IMR-90 (cell line): ENCODE measurements at regions of chr14 and their contacts with region 1.

Region 1: DNA sequence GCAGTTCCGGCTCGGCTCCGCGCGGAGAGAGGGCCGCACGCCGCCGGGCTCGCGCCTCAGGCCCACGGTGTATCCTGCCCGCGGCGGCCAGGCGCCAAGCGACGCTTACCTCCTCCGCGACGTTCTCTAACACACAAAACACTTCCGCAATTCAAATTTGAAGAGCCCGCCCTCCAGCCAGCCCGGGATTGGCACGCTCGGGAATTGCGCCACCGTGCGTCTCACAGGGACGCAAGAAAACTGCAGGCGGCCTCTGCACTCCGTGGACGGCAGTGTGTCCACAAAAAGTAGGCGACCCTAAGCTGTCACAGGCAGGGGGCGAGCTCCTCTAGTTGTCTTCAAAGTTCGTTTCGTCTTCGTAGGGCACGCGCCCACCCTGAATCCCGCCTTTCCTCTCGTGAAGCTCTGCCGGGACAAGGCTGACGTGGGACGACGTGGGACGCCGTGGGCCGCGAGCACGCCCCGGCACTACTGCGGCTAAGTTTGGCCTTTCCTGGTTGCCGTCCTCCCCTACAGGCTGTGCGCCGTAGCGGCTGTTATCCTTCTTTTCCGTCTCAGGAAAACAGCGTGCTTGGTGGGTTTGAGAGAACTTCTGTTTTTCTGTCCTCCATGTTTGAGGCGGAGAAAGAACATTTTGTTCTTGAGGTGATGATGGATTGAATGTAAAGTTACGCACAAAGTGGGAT is at the start of gene MIS18BP1:
- DNase-seq: peak; percentile 95
- ATAC-seq: peak; percentile 89
- H3K4me3 ChIP-seq: peak within 1 kb of the TSS; percentile 82
- H3K27ac ChIP-seq: peak within 1 kb of the TSS; percentile 99
- H3K4me1 ChIP-seq: peaks cover 4% of the 10 kb centered on the region; the same call in 1 of the 2 replicates
- H3K27me3 ChIP-seq: no peaks in the 10 kb centered on the region
- CTCF ChIP-seq: peak; percentile 76
- POLR2A ChIP-seq: peak; percentile 36; the same call in 1 of the 2 replicates
- RAD21 ChIP-seq: 0 out of 2 replicates have a peak, but pooled peaks have one; percentile 27
- total RNA-seq, gene MIS18BP1: 18.6 and 29.7 TPM in 2 replicates

Region 2: GRCh38 chr14:44897045-44897844 is 356.0 kb before region 1 on chr14:
- CTCF ChIA-PET with region 1: no interaction called
- POLR2A ChIA-PET with region 1: no interaction called
- dilution Hi-C with region 1: no loop called
- in situ Hi-C with region 1: no loop called
- intact Hi-C with region 1: loop called (anchors 5 kb)
- DNase-seq: peak; percentile 97
- ATAC-seq: peak; percentile 92
- H3K4me3 ChIP-seq: peak overlapping the region; percentile 96
- H3K27ac ChIP-seq: peak overlapping the region; percentile 98
- H3K4me1 ChIP-seq: peaks cover 8% of the 10 kb centered on the region
- H3K27me3 ChIP-seq: no peaks in the 10 kb centered on the region
- CTCF ChIP-seq: no peak
- POLR2A ChIP-seq: peak; percentile 85
- RAD21 ChIP-seq: no peak

Region 3: DNA sequence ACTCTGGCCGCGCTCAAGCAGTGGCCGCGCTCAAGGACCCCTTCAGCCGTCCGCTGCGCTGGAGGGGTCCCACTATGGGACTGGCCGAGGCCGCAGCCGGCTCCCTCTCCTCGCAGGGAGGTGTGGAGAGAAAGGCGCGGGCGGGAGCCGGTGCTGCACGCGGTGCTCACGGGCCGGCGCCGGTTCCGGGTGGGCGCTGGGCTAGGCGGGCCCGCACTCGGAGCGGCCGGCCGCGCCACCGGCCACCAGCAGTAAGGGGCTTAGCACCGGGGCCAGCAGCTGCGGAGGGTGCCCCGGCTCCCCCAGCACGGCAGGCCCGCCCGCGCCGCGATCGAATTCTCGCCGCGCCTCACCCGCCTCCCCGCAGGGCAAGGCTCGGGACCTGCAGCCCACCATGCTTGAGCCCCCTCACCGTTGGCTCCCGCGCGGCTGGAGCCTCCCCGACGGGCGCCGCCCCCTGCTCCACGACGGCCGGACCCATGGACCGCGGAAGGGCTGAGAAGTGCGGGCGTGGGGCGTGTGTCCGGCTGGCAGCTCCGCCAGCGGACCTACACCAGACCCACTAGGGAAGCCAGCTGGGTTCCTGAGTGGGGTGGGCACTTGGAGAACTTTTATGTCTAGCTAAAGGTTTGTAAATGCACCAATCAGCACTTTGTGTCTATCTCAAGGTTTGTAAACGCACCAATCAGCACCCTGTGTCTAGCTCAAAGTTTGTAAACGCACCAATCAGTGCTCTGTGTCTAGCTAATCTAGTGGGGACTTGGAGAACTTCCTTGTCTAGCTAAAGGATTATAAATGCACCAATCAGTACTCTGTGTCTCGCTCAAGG is 341.0 kb before region 1 on chr14:
- CTCF ChIA-PET with region 1: no interaction called
- POLR2A ChIA-PET with region 1: no interaction called
- dilution Hi-C with region 1: no loop called
- in situ Hi-C with region 1: no loop called
- intact Hi-C with region 1: loop called (anchors 5 kb)
- DNase-seq: no peak
- ATAC-seq: peak; percentile 30; the same call in 1 of the 2 replicates
- H3K4me3 ChIP-seq: peak overlapping the region; percentile 29; the same call in 1 of the 2 replicates
- H3K27ac ChIP-seq: no peak overlapping the region
- H3K4me1 ChIP-seq: 0 out of 2 replicates have a peak, but pooled peaks cover 1% of the 10 kb centered on the region
- H3K27me3 ChIP-seq: peaks cover 5% of the 10 kb centered on the region; the same call in 1 of the 2 replicates
- CTCF ChIP-seq: no peak
- POLR2A ChIP-seq: no peak
- RAD21 ChIP-seq: no peak

Region 4: GRCh38 chr14:44961604-44962333 is 291.4 kb before region 1 on chr14 and contains the starts of genes KLHL28 and TOGARAM1:
- CTCF ChIA-PET with region 1: no interaction called
- POLR2A ChIA-PET with region 1: no interaction called
- dilution Hi-C with region 1: no loop called
- in situ Hi-C with region 1: no loop called
- intact Hi-C with region 1: loop called (anchors 2 kb)
- DNase-seq: peak; percentile 100
- ATAC-seq: peak; percentile 88
- H3K4me3 ChIP-seq: peak within 1 kb of the TSS; percentile 68
- H3K27ac ChIP-seq: peak within 1 kb of the TSS; percentile 65
- H3K4me1 ChIP-seq: peaks cover 3% of the 10 kb centered on the region; the same call in 1 of the 2 replicates
- H3K27me3 ChIP-seq: no peaks in the 10 kb centered on the region
- CTCF ChIP-seq: no peak
- POLR2A ChIP-seq: peak; percentile 93
- RAD21 ChIP-seq: no peak
- total RNA-seq, gene KLHL28: 7.7 and 11.4 TPM in 2 replicates
- total RNA-seq, gene TOGARAM1: 11.1 and 13.4 TPM in 2 replicates

Region 5: DNA sequence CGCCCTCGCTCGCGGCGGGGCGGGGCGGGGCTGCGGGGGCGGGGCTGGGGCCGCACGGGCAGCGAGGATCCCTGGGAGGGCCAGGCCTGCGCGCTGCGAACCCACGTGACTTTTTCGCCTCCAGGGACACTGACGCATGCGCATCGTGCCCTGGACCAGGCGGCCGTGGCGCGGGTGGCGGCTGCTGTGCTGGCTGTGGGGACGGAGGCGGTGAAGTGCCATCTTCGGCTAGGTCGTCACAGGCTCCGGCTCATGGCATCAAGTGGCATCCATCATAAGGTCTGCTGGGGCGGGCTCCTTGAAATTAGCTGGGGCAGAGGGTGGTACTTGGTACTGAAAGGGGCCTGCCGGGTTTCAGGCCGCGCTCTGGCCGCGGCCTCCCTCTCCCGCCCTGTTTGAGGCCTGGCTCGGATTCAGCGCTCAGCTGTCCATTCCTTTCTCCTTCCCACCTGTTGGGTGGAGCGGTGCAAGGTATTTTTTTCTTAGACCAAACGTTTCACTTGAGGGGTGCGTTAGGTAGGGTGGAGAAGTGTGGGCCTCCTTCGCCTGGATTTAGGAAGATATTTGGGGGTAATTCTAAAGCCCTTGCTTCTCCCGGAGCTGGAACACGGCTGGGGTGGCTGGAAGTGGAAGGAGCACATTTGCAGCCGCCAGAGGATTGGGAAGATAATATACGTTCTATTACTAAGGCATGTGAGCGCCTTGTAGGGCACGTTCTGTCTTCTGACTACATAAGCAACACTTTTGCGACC is 169.1 kb before region 1 on chr14 and contains the start of gene PRPF39:
- CTCF ChIA-PET with region 1: no interaction called
- POLR2A ChIA-PET with region 1: no interaction called
- dilution Hi-C with region 1: no loop called
- in situ Hi-C with region 1: no loop called
- intact Hi-C with region 1: loop called (anchors 1 kb)
- DNase-seq: peak; percentile 88
- ATAC-seq: peak; percentile 97
- H3K4me3 ChIP-seq: peak within 1 kb of the TSS; percentile 70
- H3K27ac ChIP-seq: peak within 1 kb of the TSS; percentile 68
- H3K4me1 ChIP-seq: no peaks in the 10 kb centered on the region
- H3K27me3 ChIP-seq: no peaks in the 10 kb centered on the region
- CTCF ChIP-seq: no peak
- POLR2A ChIP-seq: peak; percentile 90
- RAD21 ChIP-seq: no peak
- total RNA-seq, gene PRPF39: 25.6 and 29.6 TPM in 2 replicates

Region 6: DNA sequence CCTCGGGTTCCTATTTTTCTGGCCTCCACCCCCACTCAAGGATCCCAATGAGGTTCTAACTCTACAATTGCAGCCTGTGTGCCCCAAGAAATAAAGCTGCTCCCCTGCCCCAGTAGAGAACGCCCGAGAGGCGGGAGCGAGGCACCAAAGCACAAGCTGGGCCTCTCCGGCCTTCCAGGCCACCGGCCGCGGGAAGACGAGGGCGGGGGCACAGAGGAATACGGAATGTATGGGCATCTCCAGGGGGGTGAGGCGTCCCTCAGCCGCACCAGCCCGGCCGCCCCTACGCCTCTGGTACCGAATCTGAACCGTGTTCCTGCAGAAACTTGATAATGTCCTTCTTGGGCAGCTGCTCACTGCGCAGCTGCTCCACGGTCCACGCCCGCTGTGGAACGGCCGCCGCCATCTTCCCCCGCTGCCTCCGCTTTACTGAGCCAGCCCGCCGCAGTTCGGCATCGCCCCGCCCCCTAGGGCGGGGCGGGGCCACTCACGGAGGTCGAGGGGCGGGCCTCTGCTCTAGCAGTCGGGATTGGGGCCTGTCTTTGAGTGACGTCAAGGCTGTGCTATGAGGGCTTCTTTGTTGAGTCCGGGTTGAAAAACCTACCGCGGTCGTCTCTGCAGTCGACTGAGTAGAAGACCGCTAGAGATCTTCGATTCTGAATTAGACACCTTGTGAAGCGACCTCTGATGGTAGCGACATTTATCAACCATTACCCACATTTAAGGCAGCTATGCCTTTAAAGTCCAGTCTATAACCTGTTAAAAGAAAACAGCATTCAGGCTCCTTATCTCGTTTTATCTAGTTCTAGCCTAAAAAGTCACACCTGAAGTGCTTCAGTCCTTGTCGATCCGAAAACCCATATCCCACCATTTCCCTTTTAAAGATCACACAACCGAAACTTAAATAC is 118.9 kb before region 1 on chr14 and contains the start of gene FKBP3:
- CTCF ChIA-PET with region 1: no interaction called
- POLR2A ChIA-PET with region 1: no interaction called
- dilution Hi-C with region 1: no loop called
- in situ Hi-C with region 1: no loop called
- intact Hi-C with region 1: loop called (anchors 1 kb)
- DNase-seq: peak; percentile 99
- ATAC-seq: peak; percentile 96
- H3K4me3 ChIP-seq: peak within 1 kb of the TSS; percentile 91
- H3K27ac ChIP-seq: peak within 1 kb of the TSS; percentile 89
- H3K4me1 ChIP-seq: no peaks in the 10 kb centered on the region
- H3K27me3 ChIP-seq: no peaks in the 10 kb centered on the region
- CTCF ChIP-seq: 0 out of 2 replicates have a peak, but pooled peaks have one; percentile 16
- POLR2A ChIP-seq: peak; percentile 72
- RAD21 ChIP-seq: no peak; the same call in 1 of the 2 replicates
- total RNA-seq, gene FKBP3: 8.6 and 31.1 TPM in 2 replicates